ENCODE measurements at regions of chr7 and their contacts with region 1.

Region 1: DNA sequence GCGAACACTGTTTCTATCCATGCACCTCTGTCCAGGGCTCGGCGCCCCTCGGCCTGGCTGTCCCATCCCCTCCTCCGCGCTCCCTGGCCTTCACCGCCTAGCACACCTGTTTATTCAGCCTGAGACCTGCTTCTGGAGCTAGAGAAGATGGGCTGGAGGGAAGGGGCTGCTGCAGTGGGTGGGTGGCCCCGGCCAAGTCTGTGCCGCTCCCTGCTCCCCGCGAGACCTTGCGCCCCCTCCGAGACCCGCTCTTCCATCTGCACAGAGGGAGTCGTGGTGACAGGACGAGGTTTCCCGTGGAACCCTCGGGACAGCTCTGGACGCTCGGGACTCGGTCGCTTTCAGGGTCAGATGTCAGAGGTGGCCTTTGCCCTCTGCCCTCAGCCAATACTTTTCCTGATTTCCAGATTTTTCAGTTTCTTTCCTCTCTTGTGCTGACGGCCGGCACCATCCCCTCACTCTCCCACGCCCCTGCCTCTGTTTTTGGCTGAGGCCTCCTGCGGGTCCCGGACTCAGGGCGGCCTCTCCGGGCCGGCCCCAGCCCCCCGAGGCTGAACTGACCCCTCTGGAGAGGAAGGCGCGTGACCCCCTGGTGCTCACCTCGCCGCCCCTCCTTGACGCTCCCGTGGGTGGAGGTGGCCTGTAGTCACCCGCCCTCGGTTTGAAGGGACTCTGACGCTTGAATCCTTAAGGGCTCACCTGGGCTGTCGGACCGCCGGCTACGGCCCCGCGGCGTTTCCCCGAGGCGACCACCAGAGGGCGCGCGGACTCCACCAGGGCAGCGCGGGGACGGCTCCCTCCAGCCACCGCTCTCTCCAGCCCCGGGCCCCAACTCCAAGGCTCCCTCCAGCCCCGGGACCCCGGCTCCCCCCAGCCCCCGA is 15.6 kb downstream of the SHH start:
- DNase-seq: peak; percentile 67
- H3K4me3 ChIP-seq: no peak overlapping the region
- H3K27ac ChIP-seq: no peak overlapping the region
- H3K4me1 ChIP-seq: no peaks in the 10 kb centered on the region
- H3K27me3 ChIP-seq: peaks cover 47% of the 10 kb centered on the region

Region 2: GRCh38 chr7:156827587-156828203 is 1031.1 kb after region 1 on chr7:
- in situ Hi-C with region 1: loop called (anchors 10 kb)
- DNase-seq: peak; percentile 60
- H3K4me3 ChIP-seq: no peak overlapping the region
- H3K27ac ChIP-seq: no peak overlapping the region
- H3K4me1 ChIP-seq: no peaks in the 10 kb centered on the region
- H3K27me3 ChIP-seq: no peaks in the 10 kb centered on the region

Measured in GM23248 (cell line).